ENCODE measurements at regions of chr7 and their contacts with region 1.

Region 1: DNA sequence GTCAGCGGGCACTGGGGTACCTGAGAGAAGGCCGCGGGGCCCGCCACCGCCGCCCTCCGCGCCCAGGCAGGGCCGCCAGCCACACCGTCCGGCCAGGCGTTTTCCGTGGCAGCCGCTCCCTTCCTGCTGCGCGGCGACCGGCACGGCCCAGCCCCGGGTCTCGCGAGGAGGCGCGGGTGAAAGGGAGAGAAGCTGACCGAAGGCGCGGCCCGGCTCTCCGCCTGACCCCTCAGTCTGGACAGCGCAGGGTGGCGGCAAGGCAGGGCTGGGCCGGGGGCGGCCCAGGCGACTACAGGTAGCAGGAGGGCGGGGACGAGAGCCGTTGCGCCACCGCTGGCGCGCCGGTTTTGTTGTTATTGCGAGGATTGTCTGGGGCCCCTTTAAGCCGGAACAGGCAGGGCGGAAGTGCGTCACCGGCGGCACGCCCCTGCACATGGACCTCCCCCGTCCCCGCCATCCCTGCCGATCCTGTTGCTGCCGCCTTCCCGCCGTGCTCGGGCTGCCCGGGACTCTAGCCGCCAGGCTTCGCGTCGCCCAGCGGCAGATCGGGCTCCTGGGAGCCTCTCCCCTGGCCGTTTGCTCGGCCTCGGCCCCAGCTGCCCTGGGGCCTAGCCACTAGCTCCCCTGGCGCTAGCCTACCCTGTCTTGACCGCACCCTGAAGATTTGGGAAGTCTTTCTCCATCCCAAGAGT is at the start of gene HERPUD2:
- DNase-seq: peak; percentile 92
- H3K4me3 ChIP-seq: peak within 1 kb of the TSS; percentile 87
- H3K27ac ChIP-seq: peak within 1 kb of the TSS; percentile 52
- H3K4me1 ChIP-seq: peaks cover 41% of the 10 kb centered on the region
- CTCF ChIP-seq: no peak
- total RNA-seq, gene HERPUD2: 11.9 and 18.8 TPM in 2 replicates

Region 2: GRCh38 chr7:35707422-35707821 is 12.5 kb after region 1 on chr7:
- CTCF ChIA-PET with region 1: interaction called, 4 read pairs
- POLR2A ChIA-PET with region 1: interaction called, 14 read pairs
- intact Hi-C with region 1: no loop called
- DNase-seq: no peak
- H3K4me3 ChIP-seq: no peak overlapping the region
- H3K27ac ChIP-seq: no peak overlapping the region
- H3K4me1 ChIP-seq: peaks cover 21% of the 10 kb centered on the region
- CTCF ChIP-seq: no peak

Region 3: DNA sequence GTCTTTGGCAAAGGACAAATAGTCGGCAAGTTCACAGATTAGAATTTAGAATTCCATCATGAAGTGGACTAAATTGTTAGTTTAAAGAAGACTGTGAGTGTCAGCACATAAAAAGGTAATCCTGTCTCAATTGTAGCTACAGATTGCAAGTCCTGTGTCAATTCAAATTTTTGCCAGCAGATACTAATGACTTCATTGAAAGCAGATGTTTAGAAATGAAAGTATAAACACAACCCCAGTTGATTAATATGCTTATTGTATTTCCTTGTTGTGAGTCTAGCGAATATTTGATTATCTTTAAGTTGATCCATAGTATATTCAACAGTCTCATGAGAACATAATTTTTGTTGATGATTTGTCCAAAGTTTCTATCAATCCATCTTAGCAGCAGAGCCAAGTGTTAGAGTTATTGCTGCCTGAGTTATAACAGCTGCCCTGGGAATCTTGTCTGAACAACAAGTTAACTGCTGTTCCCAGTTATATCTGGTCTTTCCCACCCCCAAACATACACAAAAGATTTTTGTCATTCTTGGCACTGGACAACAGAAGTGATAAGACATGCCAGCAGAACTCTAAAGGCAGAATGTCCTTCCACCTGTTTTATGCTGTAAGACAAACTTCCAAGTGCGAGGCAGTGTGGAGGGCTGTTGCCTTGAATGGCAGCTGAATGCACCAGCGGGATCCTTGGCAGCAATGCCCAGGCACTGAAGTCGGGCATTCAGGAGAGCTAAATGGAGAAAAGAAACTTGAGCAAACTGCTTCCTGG is 21.3 kb after region 1 on chr7:
- CTCF ChIA-PET with region 1: no interaction called
- POLR2A ChIA-PET with region 1: interaction called, 10 read pairs
- intact Hi-C with region 1: no loop called
- DNase-seq: no peak
- H3K4me3 ChIP-seq: peak overlapping the region; percentile 4
- H3K27ac ChIP-seq: peak overlapping the region; percentile 1
- H3K4me1 ChIP-seq: peaks cover 58% of the 10 kb centered on the region
- CTCF ChIP-seq: no peak

Region 4: GRCh38 chr7:36079446-36080025 is 384.6 kb after region 1 on chr7:
- CTCF ChIA-PET with region 1: no interaction called
- POLR2A ChIA-PET with region 1: no interaction called
- intact Hi-C with region 1: no loop called
- DNase-seq: no peak
- H3K4me3 ChIP-seq: no peak overlapping the region
- H3K27ac ChIP-seq: no peak overlapping the region
- H3K4me1 ChIP-seq: no peaks in the 10 kb centered on the region
- CTCF ChIP-seq: no peak

Region 5: DNA sequence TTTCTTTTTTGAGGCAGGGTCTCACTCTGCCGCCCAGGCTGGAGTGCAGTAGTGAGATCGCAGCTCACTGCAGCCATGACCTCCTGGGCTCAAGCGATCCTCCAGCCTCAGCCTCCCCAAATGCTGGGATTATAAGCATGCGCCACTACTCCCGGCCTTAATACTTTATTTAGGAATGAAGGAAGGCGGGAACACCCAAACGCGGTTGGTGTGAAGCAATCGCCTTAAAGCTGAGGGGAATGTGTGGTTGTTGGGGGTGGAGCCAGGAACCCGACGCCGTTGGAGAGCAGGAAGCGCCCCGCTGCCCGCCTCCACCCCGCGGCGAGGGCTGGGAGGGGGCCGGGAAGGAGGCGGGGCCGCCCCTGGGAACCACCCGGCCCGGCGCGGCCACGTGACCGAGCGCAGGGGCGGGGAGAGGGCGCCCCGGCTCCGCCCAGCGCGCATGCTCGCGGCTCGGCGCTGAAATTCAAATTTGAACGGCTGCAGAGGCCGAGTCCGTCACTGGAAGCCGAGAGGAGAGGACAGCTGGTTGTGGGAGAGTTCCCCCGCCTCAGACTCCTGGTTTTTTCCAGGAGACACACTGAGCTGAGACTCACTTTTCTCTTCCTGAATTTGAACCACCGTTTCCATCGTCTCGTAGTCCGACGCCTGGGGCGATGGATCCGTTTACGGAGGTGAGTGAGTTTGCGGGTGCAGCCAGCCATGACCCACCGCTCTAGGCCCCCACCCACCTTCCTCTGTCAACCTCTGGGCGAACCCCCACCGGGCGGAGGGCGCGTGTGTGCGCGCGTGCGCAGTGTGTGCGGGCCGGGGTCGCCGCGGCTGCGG is 694.7 kb after region 1 on chr7 and contains the start of gene ANLN:
- CTCF ChIA-PET with region 1: no interaction called
- POLR2A ChIA-PET with region 1: interaction called, 3 read pairs
- intact Hi-C with region 1: loop called (anchors 10 kb)
- DNase-seq: peak; percentile 92
- H3K4me3 ChIP-seq: peak within 1 kb of the TSS; percentile 85
- H3K27ac ChIP-seq: peak within 1 kb of the TSS; percentile 82
- H3K4me1 ChIP-seq: peaks cover 32% of the 10 kb centered on the region
- CTCF ChIP-seq: no peak
- total RNA-seq, gene ANLN: 47.3 and 56.5 TPM in 2 replicates